HAP-1 (cell line): ENCODE measurements at regions of chr6 and their contacts with region 1.

Region 1: DNA sequence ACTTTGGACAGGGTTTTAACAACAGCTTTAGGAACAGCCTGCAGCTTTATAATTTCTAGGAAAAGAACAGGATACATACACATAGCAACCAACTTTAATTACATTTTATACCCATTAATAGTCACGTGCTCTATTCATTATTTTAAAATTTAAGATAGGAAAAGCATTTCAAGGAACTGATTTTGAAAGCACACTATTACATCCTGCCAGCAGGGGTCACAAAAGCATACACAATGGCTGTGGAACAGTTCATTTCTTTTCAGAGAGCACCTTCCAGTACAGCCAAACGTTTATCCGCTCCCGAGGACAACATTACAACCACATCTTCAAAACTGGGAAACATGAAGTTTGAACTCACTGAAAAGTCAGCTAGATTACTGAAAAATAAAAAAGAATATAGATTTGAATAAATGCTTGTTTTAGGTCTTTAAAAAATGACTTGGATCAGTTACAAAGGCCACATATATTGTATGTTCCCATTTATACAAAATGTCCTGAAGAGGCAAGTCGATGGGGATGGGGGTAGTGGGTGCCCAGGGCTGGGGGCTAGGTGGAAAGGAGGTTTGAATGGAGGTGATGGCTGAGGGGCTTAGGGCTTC is 104.6 kb upstream of the EXOC2 start:
- DNase-seq: peak; percentile 40 to 64
- H3K4me3 ChIP-seq: no peak overlapping the region
- H3K4me1 ChIP-seq: no peaks in the 10 kb centered on the region
- H3K27me3 ChIP-seq: peaks cover 74% of the 10 kb centered on the region

Region 2: GRCh38 chr6:593139-593906 is 204.3 kb before region 1 on chr6:
- in situ Hi-C with region 1: loop called (anchors 10 kb)
- DNase-seq: peak; percentile 67 to 73
- H3K4me3 ChIP-seq: no peak overlapping the region
- H3K4me1 ChIP-seq: no peaks in the 10 kb centered on the region
- H3K27me3 ChIP-seq: no peaks in the 10 kb centered on the region

Region 3: GRCh38 chr6:1396952-1397868 is 599.6 kb after region 1 on chr6:
- in situ Hi-C with region 1: loop called (anchors 25 kb)
- DNase-seq: peak; percentile 85 to 87
- H3K4me3 ChIP-seq: no peak overlapping the region
- H3K4me1 ChIP-seq: peaks cover 6% of the 10 kb centered on the region
- H3K27me3 ChIP-seq: no peaks in the 10 kb centered on the region